ENCODE measurements at regions of chr2 and their contacts with region 1.

Region 1: GRCh38 chr2:73828818-73829570 is at the start of gene STAMBP:
- DNase-seq: peak; percentile 96
- ATAC-seq: peak; percentile 92
- H3K4me3 Mint-ChIP-seq: peak within 1 kb of the TSS; percentile 93
- H3K27ac Mint-ChIP-seq: peak within 1 kb of the TSS; percentile 95
- H3K4me1 Mint-ChIP-seq: peaks cover 46% of the 10 kb centered on the region
- H3K27me3 Mint-ChIP-seq: no peaks in the 10 kb centered on the region
- total RNA-seq, gene STAMBP: 42.8 to 58.8 TPM

Region 2: GRCh38 chr2:73812635-73813034 is 16.4 kb before region 1 on chr2:
- CTCF ChIA-PET with region 1: interaction called, 15 read pairs
- DNase-seq: no peak
- ATAC-seq: no peak
- H3K4me3 Mint-ChIP-seq: no peak overlapping the region
- H3K27ac Mint-ChIP-seq: no peak overlapping the region
- H3K4me1 Mint-ChIP-seq: peaks cover 10% of the 10 kb centered on the region
- H3K27me3 Mint-ChIP-seq: peaks cover 9% of the 10 kb centered on the region

Region 3: GRCh38 chr2:73985308-73986084 is 156.5 kb after region 1 on chr2:
- CTCF ChIA-PET with region 1: interaction called, 23 read pairs
- DNase-seq: peak; percentile 68
- ATAC-seq: peak; percentile 35
- H3K4me3 Mint-ChIP-seq: peak overlapping the region; percentile 74
- H3K27ac Mint-ChIP-seq: peak overlapping the region; percentile 82
- H3K4me1 Mint-ChIP-seq: peaks cover 56% of the 10 kb centered on the region
- H3K27me3 Mint-ChIP-seq: peaks cover 23% of the 10 kb centered on the region

Region 4: GRCh38 chr2:74119912-74120825 is 291.2 kb after region 1 on chr2:
- CTCF ChIA-PET with region 1: interaction called, 16 read pairs
- DNase-seq: peak; percentile 91
- ATAC-seq: peak; percentile 99
- H3K4me3 Mint-ChIP-seq: peak overlapping the region; percentile 83
- H3K27ac Mint-ChIP-seq: peak overlapping the region; percentile 94
- H3K4me1 Mint-ChIP-seq: peaks cover 12% of the 10 kb centered on the region
- H3K27me3 Mint-ChIP-seq: no peaks in the 10 kb centered on the region

Region 5: DNA sequence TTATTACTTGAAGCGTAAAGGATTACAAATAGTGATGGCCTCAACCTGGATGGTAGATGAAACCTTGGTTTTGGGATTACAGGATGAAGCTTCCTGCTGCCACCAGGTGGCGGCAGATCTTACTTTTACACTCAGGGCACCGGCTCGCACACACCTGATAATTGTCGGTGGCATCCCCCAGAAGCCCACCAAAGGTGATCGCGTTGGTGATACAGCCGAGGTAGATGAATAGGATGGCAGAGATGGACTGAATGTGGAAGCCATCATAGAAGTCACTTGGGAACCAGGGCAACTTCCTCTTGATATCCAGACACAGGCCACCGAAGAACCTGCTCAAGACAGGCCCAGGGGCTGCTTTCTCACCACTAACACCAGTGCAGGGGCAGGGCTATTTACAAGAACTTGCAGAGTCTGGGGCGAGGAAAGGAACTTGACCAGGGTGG is 421.2 kb after region 1 on chr2:
- CTCF ChIA-PET with region 1: interaction called, 11 read pairs
- DNase-seq: peak; percentile 66
- ATAC-seq: peak; percentile 84
- H3K4me3 Mint-ChIP-seq: no peak overlapping the region
- H3K27ac Mint-ChIP-seq: no peak overlapping the region
- H3K4me1 Mint-ChIP-seq: peaks cover 5% of the 10 kb centered on the region
- H3K27me3 Mint-ChIP-seq: no peaks in the 10 kb centered on the region

Region 6: GRCh38 chr2:74391580-74392448 is 562.8 kb after region 1 on chr2:
- CTCF ChIA-PET with region 1: interaction called, 12 read pairs
- DNase-seq: peak; percentile 96
- ATAC-seq: peak; percentile 82
- H3K4me3 Mint-ChIP-seq: peak overlapping the region; percentile 86
- H3K27ac Mint-ChIP-seq: peak overlapping the region; percentile 97
- H3K4me1 Mint-ChIP-seq: peaks cover 6% of the 10 kb centered on the region
- H3K27me3 Mint-ChIP-seq: peaks cover 8% of the 10 kb centered on the region

Measured in activated CD8-positive, alpha-beta memory T cell treated with anti-CD3 and anti-CD28 coated beads, Interleukin-2, amount 10 ng/mL, durations not matched to agents 7 days and 5 days (primary cell).